ENCODE measurements at regions of chr3 and their contacts with region 1.

Region 1: GRCh38 chr3:30644593-30645012 is 38.2 kb downstream of the TGFBR2 start:
- DNase-seq: no peak
- H3K4me3 Mint-ChIP-seq: peak overlapping the region; percentile 64
- H3K27ac Mint-ChIP-seq: peak overlapping the region; percentile 95
- H3K4me1 Mint-ChIP-seq: peaks cover 88% of the 10 kb centered on the region
- H3K27me3 Mint-ChIP-seq: no peaks in the 10 kb centered on the region

Region 2: DNA sequence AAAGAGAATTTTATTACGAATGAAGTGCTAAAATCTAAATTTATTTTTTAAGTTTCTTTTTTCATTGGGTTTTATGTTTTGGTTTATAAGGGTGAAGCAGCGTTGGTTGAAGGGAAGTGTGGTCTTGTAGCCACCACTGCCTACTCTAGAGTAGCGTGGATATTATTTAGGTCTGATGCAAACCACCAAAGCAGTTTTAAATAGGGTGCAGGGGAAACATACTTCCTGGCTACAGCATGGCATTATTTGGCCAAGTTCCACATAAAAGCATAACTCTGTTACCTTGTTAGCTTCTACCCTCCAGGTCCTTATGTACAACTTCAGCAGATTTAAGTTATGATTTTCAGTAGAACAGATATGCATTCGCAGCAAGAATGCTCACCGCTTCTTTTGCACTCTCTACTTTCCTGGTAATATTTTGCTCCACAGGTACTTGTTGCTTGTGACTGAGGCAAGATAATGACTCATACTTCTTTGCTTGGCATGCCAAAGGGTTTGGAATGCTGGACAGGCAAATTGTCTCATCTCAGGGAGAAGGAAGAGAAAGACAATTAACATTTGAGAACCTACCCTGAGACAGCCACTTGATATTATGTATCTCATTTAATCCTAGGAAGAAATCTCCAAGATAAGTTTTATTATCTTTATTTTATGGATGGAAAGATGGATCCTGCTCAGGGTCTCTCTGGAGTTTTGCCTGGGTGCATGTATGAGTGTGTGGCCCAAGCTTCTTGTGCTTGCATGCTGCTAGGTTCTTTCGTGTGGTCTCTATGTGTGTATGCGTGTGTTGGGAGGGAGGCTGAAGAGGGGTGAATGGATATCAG is 32.8 kb before region 1 on chr3:
- intact Hi-C with region 1: loop called (anchors 2 kb)
- DNase-seq: no peak
- H3K4me3 Mint-ChIP-seq: peak overlapping the region; percentile 68
- H3K27ac Mint-ChIP-seq: peak overlapping the region; percentile 77
- H3K4me1 Mint-ChIP-seq: peaks cover 75% of the 10 kb centered on the region
- H3K27me3 Mint-ChIP-seq: no peaks in the 10 kb centered on the region

Region 3: GRCh38 chr3:30620402-30621360 is 23.9 kb before region 1 on chr3:
- intact Hi-C with region 1: loop called (anchors 1 kb)
- DNase-seq: no peak
- H3K4me3 Mint-ChIP-seq: peak overlapping the region; percentile 65
- H3K27ac Mint-ChIP-seq: peak overlapping the region; percentile 96
- H3K4me1 Mint-ChIP-seq: peaks cover 83% of the 10 kb centered on the region
- H3K27me3 Mint-ChIP-seq: no peaks in the 10 kb centered on the region

Region 4: GRCh38 chr3:30934208-30934550 is 289.6 kb after region 1 on chr3:
- intact Hi-C with region 1: no loop called
- DNase-seq: no peak
- H3K4me3 Mint-ChIP-seq: no peak overlapping the region
- H3K27ac Mint-ChIP-seq: no peak overlapping the region
- H3K4me1 Mint-ChIP-seq: peaks cover 4% of the 10 kb centered on the region
- H3K27me3 Mint-ChIP-seq: peaks cover 5% of the 10 kb centered on the region